Activated CD4-positive, alpha-beta T cell treated with anti-CD3 and anti-CD28 coated beads, Interleukin-2, amount 10 ng/mL, durations not matched to agents 24 days and 14 days (primary cell): ENCODE measurements at regions of chr1 and their contacts with region 1.

Region 1: GRCh38 chr1:12296623-12297022 is 66.8 kb downstream of the VPS13D start:
- DNase-seq: no peak
- H3K4me3 Mint-ChIP-seq: peak overlapping the region; percentile 33
- H3K27ac Mint-ChIP-seq: peak overlapping the region; percentile 69
- H3K4me1 Mint-ChIP-seq: peaks cover 26% of the 10 kb centered on the region
- H3K27me3 Mint-ChIP-seq: no peaks in the 10 kb centered on the region

Region 2: GRCh38 chr1:12220890-12221289 is 75.7 kb before region 1 on chr1:
- intact Hi-C with region 1: no loop called
- DNase-seq: no peak
- H3K4me3 Mint-ChIP-seq: no peak overlapping the region
- H3K27ac Mint-ChIP-seq: no peak overlapping the region
- H3K4me1 Mint-ChIP-seq: no peaks in the 10 kb centered on the region
- H3K27me3 Mint-ChIP-seq: peaks cover 7% of the 10 kb centered on the region

Region 3: GRCh38 chr1:12344596-12345349 is 48.1 kb after region 1 on chr1:
- intact Hi-C with region 1: loop called (anchors 2 kb)
- DNase-seq: peak; percentile 67
- H3K4me3 Mint-ChIP-seq: peak overlapping the region; percentile 71
- H3K27ac Mint-ChIP-seq: peak overlapping the region; percentile 85
- H3K4me1 Mint-ChIP-seq: peaks cover 42% of the 10 kb centered on the region
- H3K27me3 Mint-ChIP-seq: no peaks in the 10 kb centered on the region

Region 4: DNA sequence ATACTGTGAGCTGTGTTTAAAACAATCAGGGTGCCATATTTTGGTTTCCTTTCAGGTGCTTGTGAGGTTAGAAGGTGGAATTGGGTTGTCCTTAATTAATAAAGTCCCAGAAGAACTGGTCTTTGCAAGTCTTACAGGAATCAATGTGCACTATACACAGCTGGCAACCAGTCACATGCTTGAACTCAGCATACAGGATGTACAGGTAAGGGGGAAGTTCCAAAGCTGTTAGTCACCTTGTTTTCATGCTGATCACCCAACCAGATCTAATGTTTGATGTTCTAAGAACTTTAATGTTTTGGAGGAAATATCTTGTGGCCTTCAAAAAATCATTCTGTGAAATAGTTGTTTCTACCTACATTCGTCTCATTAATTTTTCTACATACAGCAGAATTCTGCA is 89.5 kb after region 1 on chr1:
- intact Hi-C with region 1: loop called (anchors 5 kb)
- DNase-seq: peak; percentile 68
- H3K4me3 Mint-ChIP-seq: peak overlapping the region; percentile 55
- H3K27ac Mint-ChIP-seq: peak overlapping the region; percentile 50
- H3K4me1 Mint-ChIP-seq: peaks cover 51% of the 10 kb centered on the region
- H3K27me3 Mint-ChIP-seq: no peaks in the 10 kb centered on the region

Region 5: GRCh38 chr1:12518931-12519692 is 222.5 kb after region 1 on chr1:
- intact Hi-C with region 1: loop called (anchors 5 kb)
- DNase-seq: no peak
- H3K4me3 Mint-ChIP-seq: peak overlapping the region; percentile 35
- H3K27ac Mint-ChIP-seq: peak overlapping the region; percentile 81
- H3K4me1 Mint-ChIP-seq: peaks cover 29% of the 10 kb centered on the region
- H3K27me3 Mint-ChIP-seq: no peaks in the 10 kb centered on the region